Cardiac septum (tissue), 1 donor: ENCODE measurements at regions of chr12 and their contacts with region 1.

Region 1: GRCh38 chr12:115598871-115599811 is 678.4 kb downstream of the MED13L start:
- DNase-seq: no peak

Region 2: DNA sequence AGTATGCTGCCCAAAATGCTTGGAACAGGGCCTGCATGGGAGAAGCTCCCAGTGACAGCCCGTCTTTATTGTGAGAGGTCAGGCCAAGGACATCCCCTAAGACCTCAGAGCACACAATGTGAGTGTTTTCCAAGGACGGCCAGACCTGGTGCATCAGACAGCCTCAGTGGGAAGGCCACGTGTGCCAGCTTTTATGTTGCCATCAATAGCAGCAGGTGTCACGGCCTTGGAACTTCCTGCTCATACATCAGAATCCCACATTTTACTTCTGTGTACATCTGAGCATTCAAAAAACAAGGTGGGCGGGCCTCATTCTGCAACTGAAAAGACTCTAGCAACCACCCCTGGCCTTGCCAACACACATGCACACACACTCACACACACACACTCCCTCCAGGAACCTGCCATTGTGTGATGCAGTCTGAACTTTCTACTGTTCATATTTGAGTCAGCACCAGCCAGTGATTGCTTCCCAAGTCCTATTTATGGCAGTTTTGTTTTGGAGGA is 162.0 kb before region 1 on chr12:
- intact Hi-C with region 1: loop called (anchors 5 kb)
- DNase-seq: no peak

Region 3: GRCh38 chr12:115660211-115660805 is 61.2 kb after region 1 on chr12:
- intact Hi-C with region 1: loop called (anchors 2 kb)
- DNase-seq: no peak